ENCODE measurements at regions of chr3 and their contacts with region 1.

Region 1: GRCh38 chr3:168061332-168061996 is 34.3 kb downstream of the GOLIM4 start:
- DNase-seq: no peak
- CTCF ChIP-seq: no peak

Region 2: GRCh38 chr3:168047190-168047795 is 14.2 kb before region 1 on chr3:
- CTCF ChIA-PET with region 1: interaction called, 32 read pairs
- POLR2A ChIA-PET with region 1: no interaction called
- DNase-seq: peak; percentile 57
- CTCF ChIP-seq: peak; percentile 69

Region 3: GRCh38 chr3:168095611-168096209 is 34.2 kb after region 1 on chr3 and contains the start of gene GOLIM4:
- CTCF ChIA-PET with region 1: interaction called, 12 read pairs
- POLR2A ChIA-PET with region 1: no interaction called
- DNase-seq: peak; percentile 96
- CTCF ChIP-seq: peak; percentile 30